ENCODE measurements at regions of chr5 and their contacts with region 1.

Region 1: GRCh38 chr5:95858661-95859326 is 36.3 kb upstream of the GLRX start:
- DNase-seq: peak; percentile 84 to 99 (median 94)

Region 2: DNA sequence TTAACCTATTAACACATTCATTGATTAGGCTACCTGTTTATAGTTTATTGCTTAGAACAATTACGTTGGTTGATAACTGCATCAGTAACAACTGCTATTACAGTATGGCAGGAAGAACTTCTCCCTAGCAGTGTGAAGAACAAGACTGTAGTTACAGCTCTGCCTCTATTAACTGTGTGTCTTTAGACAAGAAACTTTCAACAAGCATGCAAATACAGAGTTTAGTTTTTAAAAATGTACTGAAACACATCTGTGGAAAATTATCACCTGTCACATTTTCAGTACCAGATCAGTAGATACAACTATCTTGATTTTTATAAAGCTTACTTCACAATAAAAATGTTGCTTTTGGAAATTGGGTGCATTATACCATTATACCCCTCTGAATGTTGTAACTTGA is 80.7 kb after region 1 on chr5:
- intact Hi-C with region 1: no loop called
- DNase-seq: no peak

Region 3: DNA sequence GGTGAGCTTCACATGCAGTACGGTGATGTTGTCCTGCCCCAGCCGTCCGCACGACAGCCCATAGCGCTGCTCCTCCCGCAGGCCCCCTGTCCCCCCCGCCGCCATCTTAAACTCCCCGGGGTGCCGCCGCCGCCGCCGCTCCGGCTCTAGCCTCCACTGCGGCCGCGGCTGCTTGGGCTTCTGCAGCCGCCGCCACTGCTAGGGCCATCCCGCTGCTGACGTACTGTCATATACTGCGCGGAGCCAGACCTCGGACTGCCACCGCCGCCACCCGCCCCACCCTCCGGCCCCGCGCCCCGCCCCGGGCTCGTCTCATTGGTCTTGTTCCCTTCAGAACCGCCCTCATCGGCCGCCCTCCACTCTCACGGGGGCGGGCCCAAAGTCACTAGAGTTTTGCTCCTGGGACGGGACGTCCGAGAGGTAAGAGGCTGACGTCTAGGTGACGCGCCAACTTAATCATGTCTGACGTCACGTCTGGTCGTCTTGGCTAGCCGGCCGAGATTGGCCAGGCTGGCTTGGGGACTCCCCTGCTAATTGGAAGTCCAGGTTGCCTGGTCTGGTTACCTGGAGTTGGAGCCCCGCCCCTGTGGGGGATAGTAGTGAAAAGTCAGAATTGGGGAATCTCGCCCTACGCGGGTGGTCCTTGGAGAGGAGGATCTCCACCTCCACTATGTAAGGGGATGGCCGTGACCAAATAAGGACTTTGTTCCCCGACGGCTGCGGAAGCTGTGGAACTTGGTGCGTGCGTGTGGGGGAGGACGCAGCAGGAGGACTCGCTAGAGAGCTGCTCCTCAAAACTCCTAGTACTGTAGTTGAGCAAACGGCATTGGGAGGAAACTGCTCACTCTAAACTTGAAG is 103.1 kb after region 1 on chr5 and contains the start of gene ELL2:
- intact Hi-C with region 1: loop called (anchors 2 kb)
- DNase-seq: peak; percentile 90 to 99 (median 96)

Region 4: GRCh38 chr5:96336351-96336985 is 477.7 kb after region 1 on chr5:
- intact Hi-C with region 1: loop called (anchors 1 kb)
- DNase-seq: peak in 7 of 10 donors; percentile 15 to 86 (median 56)

Region 5: DNA sequence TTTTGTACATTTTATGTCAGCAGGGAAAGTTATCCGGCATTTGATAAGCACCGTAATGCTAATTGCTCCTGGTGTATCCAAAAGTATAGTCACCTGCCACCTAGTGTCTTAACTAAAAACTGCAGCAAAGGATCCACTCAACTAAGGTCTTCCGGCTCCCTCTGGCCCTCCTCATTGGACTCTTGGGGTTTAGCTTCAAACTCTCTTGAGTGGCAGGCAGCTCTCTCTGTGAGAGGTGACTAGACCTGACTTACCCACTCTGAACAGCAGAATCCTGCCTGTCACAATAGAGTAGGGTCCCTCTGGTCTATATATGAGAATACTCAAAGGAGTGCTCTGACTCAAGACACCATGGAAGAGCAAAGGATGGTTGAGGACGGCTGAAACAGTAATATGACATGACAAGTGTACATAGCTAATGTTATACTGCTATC is 743.0 kb after region 1 on chr5:
- intact Hi-C with region 1: loop called (anchors 5 kb)
- DNase-seq: peak in 3 of 10 donors; percentile 14 to 26 (median 20)

Measured in posterior cingulate gyrus (tissue), 11 donors.